ENCODE measurements at regions of chr20 and their contacts with region 1.

Region 1: DNA sequence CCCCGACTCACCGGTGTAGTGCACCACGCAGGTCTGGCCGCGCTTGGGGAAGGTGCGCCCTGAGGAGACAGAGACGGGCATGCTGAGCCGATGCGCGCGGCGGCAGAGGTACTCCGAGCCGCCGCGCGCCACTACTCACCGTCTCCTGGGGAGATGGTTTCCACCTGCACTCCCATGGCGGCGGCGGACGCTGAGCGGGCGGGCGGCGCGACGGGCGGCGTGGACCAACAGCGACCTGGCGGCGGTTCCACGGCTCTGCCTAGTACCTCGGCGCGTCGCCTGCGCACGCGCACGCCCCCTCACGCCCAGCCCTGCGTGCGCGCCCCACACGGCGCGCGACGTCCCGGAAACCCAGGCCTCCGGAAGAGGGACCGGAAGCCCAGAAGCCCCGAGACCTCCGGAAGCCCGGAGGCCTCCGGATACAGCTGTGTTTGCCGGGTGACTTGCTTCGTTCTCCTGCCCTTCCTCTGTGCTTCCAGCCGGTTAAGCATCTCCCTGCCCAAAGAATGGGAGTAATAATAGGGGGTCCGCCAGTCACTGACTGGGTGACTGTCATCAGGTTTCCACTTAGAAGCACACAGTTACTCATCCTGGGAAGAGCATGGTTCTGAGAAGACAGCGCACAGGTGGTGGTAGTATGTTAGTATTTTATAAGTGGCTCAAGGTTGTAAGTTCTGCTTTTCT is at the start of gene FKBP1A:
- DNase-seq: peak; percentile 85 to 97 (median 92)
- ATAC-seq: peak; percentile 84
- H3K4me3 ChIP-seq: peak within 1 kb of the TSS; percentile 62 to 73
- H3K4me3 Mint-ChIP-seq: peak within 1 kb of the TSS; percentile 94
- H3K27ac ChIP-seq: peak within 1 kb of the TSS; percentile 58 to 68
- H3K27ac Mint-ChIP-seq: peak within 1 kb of the TSS; percentile 96
- H3K4me1 ChIP-seq: peaks cover 47% of the 10 kb centered on the region
- H3K4me1 Mint-ChIP-seq: peaks cover 53% of the 10 kb centered on the region
- H3K27me3 ChIP-seq: no peaks in the 10 kb centered on the region
- H3K27me3 Mint-ChIP-seq: no peaks in the 10 kb centered on the region
- CTCF ChIP-seq: no peak
- total RNA-seq, gene FKBP1A: 34.0 to 36.8 TPM

Region 2: GRCh38 chr20:844473-845225 is 548.3 kb before region 1 on chr20:
- CTCF ChIA-PET with region 1: no interaction called
- POLR2A ChIA-PET with region 1: no interaction called
- intact Hi-C with region 1: loop called in 1 of 2 experiments (anchors 10 kb)
- DNase-seq: peak; percentile 81 to 97 (median 90)
- ATAC-seq: peak; percentile 94
- H3K4me3 ChIP-seq: peak overlapping the region; percentile 65 to 71
- H3K4me3 Mint-ChIP-seq: peak overlapping the region; percentile 94
- H3K27ac ChIP-seq: peak overlapping the region; percentile 26 to 48
- H3K27ac Mint-ChIP-seq: peak overlapping the region; percentile 84
- H3K4me1 ChIP-seq: peaks cover 52% of the 10 kb centered on the region
- H3K4me1 Mint-ChIP-seq: peaks cover 54% of the 10 kb centered on the region
- H3K27me3 ChIP-seq: no peaks in the 10 kb centered on the region
- H3K27me3 Mint-ChIP-seq: no peaks in the 10 kb centered on the region
- CTCF ChIP-seq: no peak

Region 3: GRCh38 chr20:1225783-1226654 is 166.9 kb before region 1 on chr20 and contains the start of gene RAD21L1:
- CTCF ChIA-PET with region 1: no interaction called
- POLR2A ChIA-PET with region 1: no interaction called
- intact Hi-C with region 1: loop called (anchors 2 kb)
- DNase-seq: peak; percentile 63 to 85 (median 80)
- ATAC-seq: peak; percentile 93
- H3K4me3 ChIP-seq: peak within 1 kb of the TSS; percentile 64 to 82
- H3K4me3 Mint-ChIP-seq: peak within 1 kb of the TSS; percentile 87
- H3K27ac ChIP-seq: peak within 1 kb of the TSS in 1 of 2 experiments; percentile 44
- H3K27ac Mint-ChIP-seq: no peak within 1 kb of the TSS
- H3K4me1 ChIP-seq: peaks cover 9% of the 10 kb centered on the region
- H3K4me1 Mint-ChIP-seq: peaks cover 18% of the 10 kb centered on the region
- H3K27me3 ChIP-seq: peaks cover 0 to 8% of the 10 kb centered on the region in 2 experiments
- H3K27me3 Mint-ChIP-seq: peaks cover 13% of the 10 kb centered on the region
- CTCF ChIP-seq: no peak
- total RNA-seq, gene RAD21L1: not detected

Region 4: DNA sequence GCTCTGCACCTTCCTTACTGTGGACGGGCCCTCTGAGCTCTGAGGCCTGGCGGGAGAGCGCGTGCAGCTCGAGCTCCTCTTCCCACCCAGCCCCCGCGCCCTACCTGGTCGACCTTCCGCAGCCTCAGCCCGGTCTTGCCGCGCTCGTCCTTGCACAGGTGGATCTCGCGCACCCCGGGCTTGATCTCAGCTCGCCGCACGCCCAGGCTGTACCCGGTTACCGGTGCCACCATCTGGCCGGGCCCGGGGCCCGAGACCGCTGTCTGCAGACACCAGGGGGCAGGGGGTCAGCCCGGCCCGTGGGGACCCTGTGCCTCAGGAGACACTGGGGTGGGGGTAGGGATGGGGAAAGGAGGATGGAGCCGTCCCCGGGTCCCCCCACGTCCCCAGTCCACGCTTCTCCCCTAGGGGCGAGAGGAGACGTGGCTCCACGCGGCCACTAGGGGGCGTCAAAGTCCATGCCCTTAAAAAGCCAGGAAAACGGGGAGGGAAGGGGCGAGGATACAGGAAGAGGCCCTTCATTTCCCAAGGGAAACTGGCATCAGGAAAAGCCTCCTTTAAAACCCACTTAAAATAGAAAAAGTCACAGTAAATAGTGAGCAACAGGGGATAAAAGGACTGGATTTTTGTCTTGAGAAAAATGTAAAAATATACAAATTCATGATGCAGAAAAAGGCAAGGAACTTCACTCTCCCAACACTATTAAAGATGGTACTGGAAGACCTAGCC is 79.6 kb before region 1 on chr20:
- CTCF ChIA-PET with region 1: interaction called, 3 read pairs
- POLR2A ChIA-PET with region 1: no interaction called
- intact Hi-C with region 1: loop called in 1 of 2 experiments (anchors 5 kb)
- DNase-seq: peak; percentile 20 to 83 (median 69)
- ATAC-seq: peak; percentile 82
- H3K4me3 ChIP-seq: no peak overlapping the region
- H3K4me3 Mint-ChIP-seq: no peak overlapping the region
- H3K27ac ChIP-seq: no peak overlapping the region
- H3K27ac Mint-ChIP-seq: no peak overlapping the region
- H3K4me1 ChIP-seq: peaks cover 6% of the 10 kb centered on the region
- H3K4me1 Mint-ChIP-seq: peaks cover 8% of the 10 kb centered on the region
- H3K27me3 ChIP-seq: no peaks in the 10 kb centered on the region
- H3K27me3 Mint-ChIP-seq: no peaks in the 10 kb centered on the region
- CTCF ChIP-seq: peak; percentile 99

Region 5: DNA sequence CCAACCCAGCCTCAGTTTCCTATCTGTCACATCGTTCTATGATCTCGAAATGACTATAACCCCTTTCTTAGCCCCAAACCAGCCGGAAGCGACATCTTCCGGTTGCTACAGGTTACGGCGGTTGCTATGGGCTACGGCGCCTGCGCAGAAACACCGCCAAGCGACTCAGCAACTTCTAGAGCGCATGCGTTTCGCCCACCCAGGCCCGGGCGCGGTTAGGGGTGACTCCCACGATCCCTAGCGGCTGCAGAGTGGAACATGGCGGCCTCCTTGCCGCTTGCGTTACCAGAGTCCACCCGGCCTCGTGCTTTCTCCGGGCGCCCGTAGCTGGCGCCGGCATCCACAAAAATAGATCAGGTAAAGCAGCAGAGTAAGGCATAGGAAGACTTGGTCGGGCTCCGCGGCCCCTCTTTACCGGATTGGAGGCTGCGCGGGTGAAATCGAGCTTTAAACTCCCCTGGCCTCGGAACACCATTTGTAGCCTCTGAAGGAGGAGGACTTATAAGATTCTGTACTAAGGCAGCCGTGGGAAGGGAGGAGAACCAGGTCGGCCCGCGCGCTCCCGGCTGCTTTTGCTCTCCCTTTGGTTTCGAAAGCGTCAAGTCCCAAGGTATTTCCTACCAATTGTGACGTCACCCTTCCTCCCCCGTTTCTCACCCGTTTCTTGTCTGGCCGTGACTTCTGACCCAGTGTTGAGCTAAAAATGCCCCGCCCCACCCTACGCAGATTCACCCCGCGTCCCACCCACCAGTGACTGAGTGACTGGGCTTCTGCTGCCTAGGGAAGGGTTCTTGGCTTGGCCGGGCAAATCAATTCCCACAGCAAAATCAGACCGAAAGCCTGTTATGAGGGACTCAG is 67.6 kb before region 1 on chr20:
- CTCF ChIA-PET with region 1: no interaction called
- POLR2A ChIA-PET with region 1: interaction called, 7 read pairs
- intact Hi-C with region 1: loop called (anchors 1 kb)
- DNase-seq: peak; percentile 98 to 100 (median 99)
- ATAC-seq: peak; percentile 86
- H3K4me3 ChIP-seq: peak overlapping the region; percentile 81 to 97
- H3K4me3 Mint-ChIP-seq: no peak overlapping the region
- H3K27ac ChIP-seq: peak overlapping the region; percentile 94 to 99
- H3K27ac Mint-ChIP-seq: no peak overlapping the region
- H3K4me1 ChIP-seq: peaks cover 38% of the 10 kb centered on the region
- H3K4me1 Mint-ChIP-seq: peaks cover 20% of the 10 kb centered on the region
- H3K27me3 ChIP-seq: no peaks in the 10 kb centered on the region
- H3K27me3 Mint-ChIP-seq: no peaks in the 10 kb centered on the region
- CTCF ChIP-seq: no peak

Region 6: GRCh38 chr20:1420066-1420465 is 27.1 kb after region 1 on chr20:
- CTCF ChIA-PET with region 1: no interaction called
- POLR2A ChIA-PET with region 1: no interaction called
- intact Hi-C with region 1: loop called in 1 of 2 experiments (anchors 2 kb)
- DNase-seq: no peak
- ATAC-seq: no peak
- H3K4me3 ChIP-seq: no peak overlapping the region
- H3K4me3 Mint-ChIP-seq: no peak overlapping the region
- H3K27ac ChIP-seq: no peak overlapping the region
- H3K27ac Mint-ChIP-seq: no peak overlapping the region
- H3K4me1 ChIP-seq: no peaks in the 10 kb centered on the region
- H3K4me1 Mint-ChIP-seq: no peaks in the 10 kb centered on the region
- H3K27me3 ChIP-seq: peaks cover 0 to 2% of the 10 kb centered on the region in 2 experiments
- H3K27me3 Mint-ChIP-seq: peaks cover 8% of the 10 kb centered on the region
- CTCF ChIP-seq: no peak

Region 7: DNA sequence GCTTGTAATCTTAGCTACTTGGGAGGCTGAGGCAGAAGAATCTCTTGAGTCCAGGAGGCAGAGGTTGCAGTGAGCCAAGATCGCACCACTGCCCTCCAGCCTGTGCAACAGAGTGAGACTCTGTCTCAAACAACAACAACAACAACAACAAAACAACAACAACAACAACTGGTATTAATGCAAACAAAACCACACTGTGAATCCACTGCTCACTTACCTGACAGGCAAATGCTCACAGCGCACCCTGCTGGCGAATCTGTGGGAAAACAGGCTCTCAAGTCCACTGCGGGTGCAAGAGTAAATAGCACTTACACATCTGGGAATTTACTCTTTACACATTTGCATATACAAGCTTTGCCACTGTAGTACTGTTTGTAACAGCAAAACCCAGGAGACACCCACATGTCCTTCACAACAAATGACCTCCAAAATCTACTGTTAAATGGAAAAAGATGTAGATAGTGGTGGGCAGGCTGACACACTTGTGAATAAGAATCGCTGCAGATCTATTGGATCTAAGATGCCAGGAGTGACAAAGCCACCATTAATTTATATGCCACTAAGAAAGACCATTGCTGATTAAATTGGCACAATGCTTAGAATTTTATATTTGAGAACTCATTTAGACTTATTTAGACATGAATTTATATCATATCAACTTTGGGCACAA is 44.4 kb after region 1 on chr20:
- CTCF ChIA-PET with region 1: interaction called, 6 read pairs
- POLR2A ChIA-PET with region 1: interaction called, 3 read pairs
- intact Hi-C with region 1: loop called (anchors 1 to 2 kb)
- DNase-seq: peak; percentile 57 to 87 (median 82)
- ATAC-seq: peak; percentile 65
- H3K4me3 ChIP-seq: no peak overlapping the region
- H3K4me3 Mint-ChIP-seq: no peak overlapping the region
- H3K27ac ChIP-seq: no peak overlapping the region
- H3K27ac Mint-ChIP-seq: no peak overlapping the region
- H3K4me1 ChIP-seq: peaks cover 27% of the 10 kb centered on the region
- H3K4me1 Mint-ChIP-seq: peaks cover 41% of the 10 kb centered on the region
- H3K27me3 ChIP-seq: peaks cover 0 to 5% of the 10 kb centered on the region in 2 experiments
- H3K27me3 Mint-ChIP-seq: no peaks in the 10 kb centered on the region
- CTCF ChIP-seq: peak; percentile 82

Region 8: DNA sequence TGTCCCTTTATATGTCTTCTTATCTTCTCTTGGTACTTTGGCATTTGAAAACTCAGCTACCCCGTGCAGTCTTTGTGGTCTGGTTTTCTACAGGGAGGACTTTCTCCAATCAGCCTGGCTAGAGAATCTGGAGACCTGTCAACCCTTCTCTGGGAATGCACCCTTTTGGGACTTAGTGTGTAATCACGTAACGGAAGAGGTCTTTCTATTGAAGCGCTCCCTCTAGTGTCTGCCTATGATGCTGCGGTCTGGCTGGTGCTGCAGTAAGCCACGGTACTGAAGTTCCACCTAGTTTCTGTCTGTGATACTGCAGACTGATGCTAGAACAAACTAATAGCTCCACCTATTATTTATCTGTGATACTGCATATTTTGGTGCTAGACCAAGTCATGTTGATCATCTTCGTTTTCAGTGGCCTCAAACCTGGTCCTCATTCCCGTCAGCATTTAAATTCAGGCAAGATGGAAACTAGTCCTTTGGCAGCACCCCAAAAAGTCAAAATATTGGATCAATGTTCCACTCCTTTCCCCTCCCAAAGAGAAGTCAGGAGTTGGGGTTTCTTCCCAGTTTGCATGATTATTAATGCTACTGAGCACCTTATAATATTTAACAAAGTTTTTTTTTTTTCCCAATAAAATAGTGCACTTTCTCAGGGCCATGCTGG is 110.7 kb after region 1 on chr20:
- CTCF ChIA-PET with region 1: no interaction called
- POLR2A ChIA-PET with region 1: no interaction called
- intact Hi-C with region 1: no loop called
- DNase-seq: peak; percentile 54 to 91 (median 73)
- ATAC-seq: peak; percentile 100
- H3K4me3 ChIP-seq: no peak overlapping the region
- H3K4me3 Mint-ChIP-seq: no peak overlapping the region
- H3K27ac ChIP-seq: no peak overlapping the region
- H3K27ac Mint-ChIP-seq: no peak overlapping the region
- H3K4me1 ChIP-seq: peaks cover 3% of the 10 kb centered on the region
- H3K4me1 Mint-ChIP-seq: peaks cover 5% of the 10 kb centered on the region
- H3K27me3 ChIP-seq: no peaks in the 10 kb centered on the region
- H3K27me3 Mint-ChIP-seq: peaks cover 30% of the 10 kb centered on the region
- CTCF ChIP-seq: peak; percentile 99

Measured in CD8-positive, alpha-beta T cell (primary cell).